Left cardiac atrium (tissue), 4 donors: ENCODE measurements at regions of chr5 and their contacts with region 1.

Region 1: DNA sequence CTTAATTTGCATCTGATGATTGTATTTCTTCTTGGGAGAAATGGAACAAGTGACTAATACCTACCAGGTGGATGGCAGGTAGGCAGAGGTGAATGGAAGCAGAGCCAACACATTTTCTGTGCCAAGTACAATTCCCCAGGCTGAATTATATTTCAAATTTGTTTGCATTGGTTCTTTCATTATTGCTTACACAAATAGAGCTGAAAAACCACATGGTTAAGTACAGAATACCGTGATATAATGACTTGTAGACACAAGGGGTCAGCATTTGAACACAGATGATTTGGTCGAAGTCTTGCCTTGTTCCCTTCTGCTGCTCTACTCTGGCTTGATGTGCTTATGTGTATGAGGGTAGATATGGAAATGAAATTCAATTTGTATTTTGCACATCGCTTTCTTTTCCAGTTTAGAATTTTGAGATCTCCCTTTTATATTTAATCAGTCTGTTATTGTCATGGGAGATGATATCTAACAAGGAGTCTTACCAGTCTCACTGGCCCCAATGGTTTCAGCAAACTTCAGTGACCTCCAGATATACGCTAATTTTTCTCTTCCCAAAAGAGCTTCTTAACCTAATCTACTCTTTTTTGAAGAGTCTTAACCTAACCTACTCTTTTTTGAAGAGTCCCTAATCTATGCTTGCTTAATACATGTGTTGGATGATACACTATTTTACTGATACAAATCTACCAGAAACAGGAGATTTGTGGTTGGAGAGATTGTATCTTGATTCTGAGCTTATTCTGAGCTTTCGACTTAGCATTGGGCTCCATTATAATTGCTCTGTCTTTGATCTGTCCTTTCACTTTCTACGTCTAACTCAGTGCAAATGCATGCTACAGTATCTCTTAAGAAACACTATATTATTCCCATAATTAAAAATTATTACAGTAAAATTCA is 88.1 kb downstream of the PCSK1 start:
- DNase-seq: no peak
- ATAC-seq: peak; percentile 89 to 92

Region 2: DNA sequence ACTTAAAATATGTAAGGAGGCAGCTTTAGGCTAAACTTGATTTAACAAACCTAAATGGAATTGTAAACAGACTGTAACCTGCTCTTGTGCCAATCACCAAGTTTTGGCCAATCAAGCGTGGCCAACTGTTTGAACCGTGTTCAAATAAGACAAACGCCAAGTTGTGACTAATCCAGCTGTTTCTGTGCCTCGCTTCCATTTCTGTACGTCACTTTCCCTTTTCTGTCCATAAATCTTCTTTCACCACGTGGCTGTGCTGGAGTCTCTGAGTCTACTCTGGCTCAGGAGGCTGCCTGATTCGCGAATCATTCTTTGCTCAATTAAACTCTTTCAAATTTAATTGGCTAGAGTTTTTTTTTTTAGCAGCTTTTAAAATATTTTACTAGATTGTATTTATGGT is 726.2 kb after region 1 on chr5:
- intact Hi-C with region 1: loop called in 1 of 2 experiments (anchors 5 kb)
- DNase-seq: no peak
- ATAC-seq: no peak